Activated CD4-positive, alpha-beta T cell treated with anti-CD3 and anti-CD28 coated beads for 36 hours (primary cell): ENCODE measurements at regions of chr15 and their contacts with region 1.

Region 1: GRCh38 chr15:29059871-29060640 is 174.3 kb downstream of the APBA2 start:
- DNase-seq: no peak
- ATAC-seq: no peak
- H3K4me3 Mint-ChIP-seq: no peak overlapping the region
- H3K27ac Mint-ChIP-seq: no peak overlapping the region
- H3K4me1 Mint-ChIP-seq: peaks cover 40% of the 10 kb centered on the region
- H3K27me3 Mint-ChIP-seq: no peaks in the 10 kb centered on the region

Region 2: GRCh38 chr15:28942046-28942445 is 118.0 kb before region 1 on chr15:
- CTCF ChIA-PET with region 1: no interaction called
- POLR2A ChIA-PET with region 1: no interaction called
- intact Hi-C with region 1: no loop called
- DNase-seq: peak; percentile 55
- ATAC-seq: peak; percentile 59
- H3K4me3 Mint-ChIP-seq: no peak overlapping the region
- H3K27ac Mint-ChIP-seq: peak overlapping the region; percentile 29
- H3K4me1 Mint-ChIP-seq: peaks cover 75% of the 10 kb centered on the region
- H3K27me3 Mint-ChIP-seq: no peaks in the 10 kb centered on the region

Region 3: GRCh38 chr15:29039466-29040369 is 20.3 kb before region 1 on chr15:
- CTCF ChIA-PET with region 1: no interaction called
- POLR2A ChIA-PET with region 1: no interaction called
- intact Hi-C with region 1: loop called in 1 of 2 experiments (anchors 2 kb)
- DNase-seq: peak; percentile 54
- ATAC-seq: peak; percentile 88
- H3K4me3 Mint-ChIP-seq: peak overlapping the region; percentile 5
- H3K27ac Mint-ChIP-seq: no peak overlapping the region
- H3K4me1 Mint-ChIP-seq: peaks cover 63% of the 10 kb centered on the region
- H3K27me3 Mint-ChIP-seq: no peaks in the 10 kb centered on the region

Region 4: GRCh38 chr15:29070449-29071231 is 10.6 kb after region 1 on chr15:
- CTCF ChIA-PET with region 1: no interaction called
- POLR2A ChIA-PET with region 1: no interaction called
- intact Hi-C with region 1: no loop called
- DNase-seq: no peak
- ATAC-seq: no peak
- H3K4me3 Mint-ChIP-seq: no peak overlapping the region
- H3K27ac Mint-ChIP-seq: no peak overlapping the region
- H3K4me1 Mint-ChIP-seq: peaks cover 4% of the 10 kb centered on the region
- H3K27me3 Mint-ChIP-seq: no peaks in the 10 kb centered on the region

Region 5: DNA sequence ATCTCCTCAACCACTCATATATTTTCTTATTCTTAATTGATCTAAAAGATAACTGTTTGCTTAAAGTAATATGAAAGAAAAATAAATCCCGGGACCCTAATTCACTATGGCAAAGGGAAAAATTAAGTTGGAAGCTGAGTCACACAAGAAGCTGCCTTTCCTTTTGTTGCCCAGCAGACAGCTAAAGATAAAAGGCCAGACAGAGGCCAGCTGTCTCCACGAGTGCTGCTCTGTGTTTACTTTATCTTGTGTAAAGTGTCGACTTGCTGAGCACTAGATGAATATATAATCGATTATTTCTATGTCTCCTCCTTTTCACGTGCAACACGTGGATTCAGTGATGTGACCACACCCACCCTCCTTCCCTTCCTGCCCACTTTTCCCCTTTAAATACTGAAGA is 262.4 kb after region 1 on chr15:
- CTCF ChIA-PET with region 1: no interaction called
- POLR2A ChIA-PET with region 1: no interaction called
- intact Hi-C with region 1: no loop called
- DNase-seq: no peak
- ATAC-seq: no peak
- H3K4me3 Mint-ChIP-seq: no peak overlapping the region
- H3K27ac Mint-ChIP-seq: no peak overlapping the region
- H3K4me1 Mint-ChIP-seq: no peaks in the 10 kb centered on the region
- H3K27me3 Mint-ChIP-seq: peaks cover 13% of the 10 kb centered on the region

Region 6: DNA sequence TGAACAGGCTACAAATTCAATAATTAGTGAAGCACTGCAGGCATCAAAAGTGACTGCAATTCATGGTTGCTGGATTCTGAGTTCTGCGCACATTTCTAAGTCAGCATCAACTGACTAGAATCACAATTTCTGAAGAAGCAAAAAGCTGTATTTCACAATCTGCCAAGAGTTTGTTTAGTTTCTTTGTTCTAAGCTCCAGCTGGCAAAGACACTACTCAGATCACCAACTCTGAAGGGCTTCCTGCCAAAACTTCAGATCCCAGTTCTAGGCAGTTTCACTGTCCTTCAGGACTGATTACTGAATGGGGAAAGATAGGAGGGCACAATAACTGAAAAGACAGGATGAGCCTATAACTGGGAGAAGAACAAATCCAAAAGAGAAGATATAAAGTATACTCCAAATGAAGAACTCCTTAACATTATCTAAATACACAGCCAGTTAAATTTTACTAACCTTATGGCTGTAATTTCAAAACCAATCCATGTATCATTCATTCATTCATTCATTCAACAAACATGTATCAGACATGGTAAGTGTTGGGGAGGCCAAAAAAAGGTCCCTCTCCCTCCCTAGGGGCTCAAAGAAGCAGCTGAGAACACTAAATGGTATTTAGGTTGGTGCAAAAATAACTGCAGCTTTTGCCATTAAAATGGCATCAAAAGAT is 745.1 kb after region 1 on chr15:
- CTCF ChIA-PET with region 1: no interaction called
- POLR2A ChIA-PET with region 1: no interaction called
- intact Hi-C with region 1: no loop called
- DNase-seq: no peak
- ATAC-seq: no peak
- H3K4me3 Mint-ChIP-seq: no peak overlapping the region
- H3K27ac Mint-ChIP-seq: no peak overlapping the region
- H3K4me1 Mint-ChIP-seq: peaks cover 2% of the 10 kb centered on the region
- H3K27me3 Mint-ChIP-seq: peaks cover 48% of the 10 kb centered on the region